Right cardiac atrium (tissue), 5 donors: ENCODE measurements at regions of chr16 and their contacts with region 1.

Region 1: DNA sequence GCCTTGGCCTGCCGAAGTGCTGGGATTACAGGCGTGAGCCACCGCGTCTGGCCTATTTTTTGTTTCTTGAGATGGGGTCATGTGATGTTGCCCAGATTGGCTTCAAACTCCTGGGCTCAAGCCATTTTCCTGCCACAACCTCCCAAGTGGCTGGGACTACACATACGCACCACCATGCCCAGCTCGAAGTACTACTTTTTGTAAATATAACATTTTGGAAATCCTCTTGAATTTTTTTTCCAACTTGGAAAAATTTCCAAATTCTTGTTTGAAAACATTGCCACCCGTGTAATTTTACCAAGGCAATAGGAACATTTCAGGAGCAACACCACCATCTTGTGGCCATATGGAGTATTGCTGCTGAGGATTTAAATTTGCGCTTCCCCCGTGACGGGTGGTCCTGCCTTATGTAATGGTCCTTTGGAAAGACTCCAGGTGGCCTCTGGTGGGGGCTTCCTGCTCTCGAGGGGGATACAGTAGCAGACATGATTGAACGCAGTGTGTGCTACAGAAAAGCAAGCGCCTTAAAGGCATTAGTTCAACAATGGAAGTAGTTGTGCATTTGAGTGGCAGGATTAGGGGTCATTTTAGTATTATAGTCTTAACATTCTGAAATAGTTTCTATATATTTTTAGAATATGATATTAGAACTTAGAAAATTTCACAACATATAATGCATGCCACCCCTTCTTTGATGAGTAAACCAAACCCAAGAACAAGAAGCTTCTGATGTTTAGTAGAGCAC is 8.0 kb downstream of the FLYWCH1 start:
- DNase-seq: peak in 2 of 3 donors; percentile 40 to 74
- ATAC-seq: peak; percentile 52 to 64
- H3K4me3 ChIP-seq: no peak overlapping the region
- H3K27ac ChIP-seq: peak overlapping the region; percentile 64
- H3K4me1 ChIP-seq: peaks cover 1% of the 10 kb centered on the region
- H3K27me3 ChIP-seq: no peaks in the 10 kb centered on the region

Region 2: DNA sequence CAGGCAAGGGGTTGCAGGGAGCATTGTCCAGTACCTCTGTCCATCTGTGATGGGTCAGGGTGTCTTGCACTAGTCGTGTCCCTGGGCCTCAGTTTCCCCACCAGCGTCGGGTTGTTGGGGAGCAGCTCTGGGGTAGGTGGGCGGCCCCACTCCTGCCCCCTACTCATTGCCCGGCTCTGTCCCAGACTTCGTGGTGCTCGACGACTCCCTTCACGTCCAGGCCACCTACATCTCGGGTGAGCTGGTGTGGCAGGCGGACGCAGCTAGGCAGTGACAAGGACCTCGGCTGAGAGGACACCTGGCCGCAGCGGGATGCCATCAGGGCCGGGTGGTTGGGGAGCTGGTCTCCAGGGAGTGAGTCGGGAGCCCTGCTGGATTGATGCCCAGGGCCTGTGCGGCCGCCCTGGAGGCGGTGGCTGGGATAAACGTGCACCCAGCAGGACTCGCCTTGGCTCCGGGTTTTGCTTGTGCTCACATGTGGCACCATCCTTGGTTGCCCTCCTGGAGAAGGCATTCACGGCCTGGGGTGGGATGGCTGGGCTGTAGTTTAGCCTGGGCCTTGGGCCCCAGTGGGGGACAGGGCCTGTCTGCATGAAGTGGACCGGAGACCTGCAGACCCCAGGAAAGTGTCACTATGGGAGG is 390.3 kb before region 1 on chr16:
- intact Hi-C with region 1: no loop called
- DNase-seq: peak in 2 of 3 donors; percentile 56 to 58
- ATAC-seq: no peak
- H3K4me3 ChIP-seq: no peak overlapping the region
- H3K27ac ChIP-seq: no peak overlapping the region
- H3K4me1 ChIP-seq: no peaks in the 10 kb centered on the region
- H3K27me3 ChIP-seq: no peaks in the 10 kb centered on the region

Region 3: DNA sequence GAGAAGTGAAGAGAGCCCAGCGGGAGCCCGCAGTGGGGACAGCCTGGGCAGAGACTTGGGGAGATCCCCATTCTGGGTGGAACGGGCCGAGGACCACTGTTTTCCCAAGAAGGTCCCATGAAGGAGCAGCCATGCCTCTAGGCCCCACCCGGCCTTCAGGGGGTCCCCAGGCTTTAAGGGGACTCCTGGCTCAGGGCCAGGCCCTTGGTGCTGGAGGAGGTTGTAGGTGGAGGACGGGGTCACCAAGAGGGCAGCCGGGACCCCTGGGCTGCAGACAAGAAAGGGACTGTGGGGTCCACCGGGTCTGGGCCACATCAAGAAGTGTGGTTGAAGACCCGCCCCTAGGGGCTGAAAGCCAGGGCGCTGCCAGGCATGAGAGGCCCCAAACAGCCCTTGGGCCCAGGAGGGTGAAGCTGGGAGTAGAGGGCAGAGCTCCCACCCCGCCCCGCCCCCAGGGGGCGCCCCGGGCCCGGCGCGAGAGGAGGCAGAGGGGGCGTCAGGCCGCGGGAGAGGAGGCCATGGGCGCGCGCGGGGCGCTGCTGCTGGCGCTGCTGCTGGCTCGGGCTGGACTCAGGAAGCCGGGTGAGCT is 102.8 kb before region 1 on chr16 and contains the start of gene PRSS21:
- intact Hi-C with region 1: no loop called
- DNase-seq: no peak
- ATAC-seq: no peak
- H3K4me3 ChIP-seq: no peak within 1 kb of the TSS
- H3K27ac ChIP-seq: no peak within 1 kb of the TSS
- H3K4me1 ChIP-seq: no peaks in the 10 kb centered on the region
- H3K27me3 ChIP-seq: no peaks in the 10 kb centered on the region
- total RNA-seq, gene PRSS21: not detected

Region 4: DNA sequence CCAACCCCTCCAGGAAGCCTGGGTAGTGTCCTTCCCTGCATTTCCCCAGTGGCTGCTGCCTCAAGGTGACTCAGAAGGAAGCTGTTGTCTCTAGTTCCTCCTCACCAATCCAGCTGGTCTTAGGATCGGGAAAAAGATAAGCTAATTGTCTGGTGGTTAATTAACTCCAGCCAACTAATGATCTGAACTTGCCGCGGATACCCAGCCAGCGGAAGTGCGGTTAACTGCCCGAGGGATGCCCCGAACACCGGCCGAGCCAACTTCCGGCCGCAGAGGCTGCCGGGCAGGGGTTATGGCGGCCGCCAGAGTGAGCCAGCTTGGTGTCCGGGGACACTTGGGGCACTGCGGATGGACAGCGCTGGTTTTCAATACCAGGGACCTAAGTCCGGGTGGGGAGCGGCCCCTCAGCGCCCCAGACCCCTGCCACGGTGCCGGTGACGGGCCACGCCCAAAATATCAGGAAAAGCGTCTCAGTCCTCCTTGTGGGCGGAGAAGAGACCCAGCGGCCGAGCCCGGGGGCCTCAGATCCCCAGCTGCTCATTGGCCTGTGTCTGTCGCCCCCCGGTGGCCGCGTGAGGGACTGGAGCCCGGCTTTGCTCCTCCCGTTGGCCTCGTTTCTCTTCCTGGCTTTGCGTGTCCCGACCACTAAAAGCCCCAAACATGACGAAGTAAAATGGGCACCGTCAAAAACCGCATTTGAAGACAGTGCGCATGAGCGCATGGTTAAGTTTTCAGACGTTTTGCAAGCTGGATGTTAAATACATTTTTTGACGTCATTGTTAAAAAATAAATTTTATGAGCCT is 51.5 kb before region 1 on chr16:
- intact Hi-C with region 1: loop called in 3 of 4 experiments (anchors 5 kb)
- DNase-seq: peak; percentile 94 to 99 (median 98)
- ATAC-seq: peak; percentile 98
- H3K4me3 ChIP-seq: peak overlapping the region; percentile 76
- H3K27ac ChIP-seq: peak overlapping the region; percentile 97
- H3K4me1 ChIP-seq: no peaks in the 10 kb centered on the region
- H3K27me3 ChIP-seq: no peaks in the 10 kb centered on the region

Region 5: DNA sequence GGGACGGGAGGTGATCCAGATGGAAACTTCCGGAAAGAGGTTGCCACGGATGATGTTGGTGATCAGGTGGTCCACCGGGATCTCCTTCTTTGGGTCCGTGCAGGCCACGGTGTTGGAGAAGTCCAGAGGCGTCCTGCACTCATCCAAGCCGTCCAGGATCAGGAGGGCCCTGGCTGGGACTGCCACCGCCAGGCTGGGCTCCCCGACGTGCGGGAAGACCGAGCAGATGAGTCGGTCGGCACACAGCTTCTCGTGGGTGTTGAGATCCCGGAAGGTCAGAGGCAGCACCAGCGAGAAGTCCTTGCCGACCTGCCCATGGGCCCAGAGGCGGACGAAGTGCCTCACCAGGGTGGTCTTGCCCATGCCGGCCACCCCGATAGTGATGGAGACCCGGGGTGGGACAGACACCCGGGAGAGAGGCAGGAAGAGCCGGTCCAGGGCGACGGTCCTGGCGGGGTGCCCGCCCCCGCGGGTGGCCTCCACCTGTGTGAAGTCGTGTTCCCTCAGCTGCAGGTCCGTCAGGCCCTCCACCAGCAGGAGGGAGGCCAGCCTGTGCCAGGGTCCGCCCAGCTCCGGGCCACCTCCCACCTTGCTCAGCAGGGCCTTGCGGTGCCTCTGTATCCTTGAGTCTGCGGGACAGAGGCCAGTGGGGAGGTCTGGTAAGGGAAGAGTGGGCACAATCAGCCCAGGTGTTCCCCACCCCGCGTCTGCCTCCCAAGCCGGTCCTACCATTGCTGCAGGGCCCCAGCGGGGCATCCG is 644.6 kb after region 1 on chr16:
- intact Hi-C with region 1: no loop called
- DNase-seq: no peak
- ATAC-seq: peak; percentile 19 to 31
- H3K4me3 ChIP-seq: no peak overlapping the region
- H3K27ac ChIP-seq: no peak overlapping the region
- H3K4me1 ChIP-seq: no peaks in the 10 kb centered on the region
- H3K27me3 ChIP-seq: no peaks in the 10 kb centered on the region